HepG2 (cell line): ENCODE measurements at regions of chrX and their contacts with region 1.

Region 1: DNA sequence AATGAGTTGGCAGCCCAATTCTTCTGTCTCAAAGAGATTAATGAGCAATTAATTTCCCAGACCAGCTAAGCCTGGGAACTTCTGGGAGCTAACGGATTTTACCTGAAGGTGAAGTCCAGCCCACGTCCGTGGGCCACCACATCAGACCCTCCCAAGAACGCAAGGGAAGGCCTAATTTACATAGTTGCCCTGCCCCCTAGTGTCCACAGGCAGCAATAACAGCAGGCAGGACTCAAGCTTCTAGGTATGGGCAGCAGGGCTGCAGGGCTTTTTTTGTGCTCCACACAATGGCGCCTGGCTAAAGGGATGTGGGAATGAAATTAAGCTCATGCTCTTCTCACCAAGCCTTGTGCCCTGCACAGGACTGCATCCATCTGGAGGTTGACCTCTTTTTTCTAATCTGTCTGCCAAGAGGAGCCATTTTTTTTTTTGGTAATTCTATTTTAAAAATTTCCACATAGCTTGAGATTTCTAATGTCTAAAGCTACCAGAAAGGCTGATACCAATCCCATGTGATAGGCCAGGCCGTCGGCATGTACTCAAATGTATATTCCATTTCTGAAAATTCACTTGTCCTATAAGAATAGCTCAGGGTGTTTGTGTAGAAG is 111.9 kb upstream of the TMEM164 start:
- DNase-seq: peak; percentile 43
- ATAC-seq: peak; percentile 89
- H3K4me3 ChIP-seq: peak overlapping the region in 2 of 3 experiments; percentile 28 to 33; a peak in 2 of 6 replicates
- H3K27ac ChIP-seq: no peak overlapping the region
- H3K4me1 ChIP-seq: peaks cover 34% of the 10 kb centered on the region
- H3K27me3 ChIP-seq: no peaks in the 10 kb centered on the region
- CTCF ChIP-seq: peak; percentile 89
- EP300 ChIP-seq: no peak
- POLR2A ChIP-seq: no peak
- RAD21 ChIP-seq: peak; percentile 34; the same call in 1 of the 2 replicates

Region 2: GRCh38 chrX:109485470-109486340 is 405.3 kb before region 1 on chrX:
- CTCF ChIA-PET with region 1: interaction called, 10 read pairs
- POLR2A ChIA-PET with region 1: no interaction called
- in situ Hi-C with region 1: loop called (anchors 5 kb)
- intact Hi-C with region 1: loop called (anchors 5 kb)
- DNase-seq: peak; percentile 47
- ATAC-seq: no peak; the same call in 2 of the 3 replicates
- H3K4me3 ChIP-seq: no peak overlapping the region
- H3K27ac ChIP-seq: no peak overlapping the region
- H3K4me1 ChIP-seq: peaks cover 17% of the 10 kb centered on the region
- H3K27me3 ChIP-seq: no peaks in the 10 kb centered on the region
- CTCF ChIP-seq: peak; percentile 80
- EP300 ChIP-seq: no peak
- POLR2A ChIP-seq: no peak
- RAD21 ChIP-seq: peak; percentile 61; the same call in 1 of the 2 replicates

Region 3: DNA sequence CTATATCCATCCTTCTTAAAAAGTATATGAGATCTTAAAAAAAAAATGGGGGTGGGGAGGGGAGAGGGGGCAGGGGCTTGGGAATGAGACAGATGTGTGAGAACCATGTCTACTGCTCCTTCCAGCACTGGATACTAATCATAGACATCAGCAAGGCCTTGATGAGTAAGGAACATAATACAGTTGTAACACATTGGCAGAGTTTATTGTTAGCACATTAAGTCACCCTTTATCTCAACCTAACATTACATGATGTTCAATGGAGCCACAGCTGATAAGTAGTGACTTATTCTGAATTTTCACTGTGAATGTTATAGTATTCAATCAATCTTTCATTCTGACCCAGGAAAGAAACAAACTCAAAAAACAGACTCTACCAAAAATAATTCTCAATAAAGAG is 218.8 kb before region 1 on chrX:
- CTCF ChIA-PET with region 1: no interaction called
- POLR2A ChIA-PET with region 1: no interaction called
- in situ Hi-C with region 1: no loop called
- intact Hi-C with region 1: no loop called
- DNase-seq: no peak
- ATAC-seq: no peak
- H3K4me3 ChIP-seq: no peak overlapping the region
- H3K27ac ChIP-seq: no peak overlapping the region
- H3K4me1 ChIP-seq: no peaks in the 10 kb centered on the region
- H3K27me3 ChIP-seq: no peaks in the 10 kb centered on the region
- CTCF ChIP-seq: no peak
- EP300 ChIP-seq: no peak
- POLR2A ChIP-seq: no peak
- RAD21 ChIP-seq: no peak

Region 4: DNA sequence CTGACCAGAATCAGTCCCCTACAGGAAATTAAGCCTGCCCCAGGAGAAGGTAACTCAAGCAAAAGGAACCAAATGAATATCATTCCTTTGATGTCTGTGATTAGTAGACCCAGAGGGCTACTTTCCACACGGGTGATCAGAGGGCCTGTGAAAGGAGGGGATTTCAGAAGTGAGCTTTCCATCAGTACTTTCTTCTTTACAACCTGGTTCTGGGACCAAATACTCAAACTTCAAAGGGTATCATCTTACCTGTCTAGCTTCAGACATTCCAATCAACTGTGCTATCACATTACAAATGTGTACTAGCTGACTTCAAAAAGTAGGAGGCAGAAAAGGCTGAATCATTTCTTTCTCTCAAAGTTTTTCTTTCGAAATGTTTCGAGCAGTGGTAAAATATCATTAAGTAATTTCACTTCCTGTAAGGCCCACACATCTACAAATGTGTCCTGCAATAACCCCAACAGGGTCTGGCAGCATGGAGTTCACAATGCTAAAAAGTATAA is 181.8 kb before region 1 on chrX:
- CTCF ChIA-PET with region 1: interaction called, 10 read pairs
- POLR2A ChIA-PET with region 1: interaction called, 4 read pairs
- in situ Hi-C with region 1: no loop called
- intact Hi-C with region 1: loop called (anchors 1 kb)
- DNase-seq: peak; percentile 82
- ATAC-seq: peak; percentile 22
- H3K4me3 ChIP-seq: no peak overlapping the region
- H3K27ac ChIP-seq: peak overlapping the region; percentile 46
- H3K4me1 ChIP-seq: peaks cover 94% of the 10 kb centered on the region
- H3K27me3 ChIP-seq: no peaks in the 10 kb centered on the region
- CTCF ChIP-seq: no peak
- EP300 ChIP-seq: peak in 1 of 2 experiments; percentile 49; a peak in 1 of 4 replicates
- POLR2A ChIP-seq: no peak
- RAD21 ChIP-seq: no peak

Region 5: DNA sequence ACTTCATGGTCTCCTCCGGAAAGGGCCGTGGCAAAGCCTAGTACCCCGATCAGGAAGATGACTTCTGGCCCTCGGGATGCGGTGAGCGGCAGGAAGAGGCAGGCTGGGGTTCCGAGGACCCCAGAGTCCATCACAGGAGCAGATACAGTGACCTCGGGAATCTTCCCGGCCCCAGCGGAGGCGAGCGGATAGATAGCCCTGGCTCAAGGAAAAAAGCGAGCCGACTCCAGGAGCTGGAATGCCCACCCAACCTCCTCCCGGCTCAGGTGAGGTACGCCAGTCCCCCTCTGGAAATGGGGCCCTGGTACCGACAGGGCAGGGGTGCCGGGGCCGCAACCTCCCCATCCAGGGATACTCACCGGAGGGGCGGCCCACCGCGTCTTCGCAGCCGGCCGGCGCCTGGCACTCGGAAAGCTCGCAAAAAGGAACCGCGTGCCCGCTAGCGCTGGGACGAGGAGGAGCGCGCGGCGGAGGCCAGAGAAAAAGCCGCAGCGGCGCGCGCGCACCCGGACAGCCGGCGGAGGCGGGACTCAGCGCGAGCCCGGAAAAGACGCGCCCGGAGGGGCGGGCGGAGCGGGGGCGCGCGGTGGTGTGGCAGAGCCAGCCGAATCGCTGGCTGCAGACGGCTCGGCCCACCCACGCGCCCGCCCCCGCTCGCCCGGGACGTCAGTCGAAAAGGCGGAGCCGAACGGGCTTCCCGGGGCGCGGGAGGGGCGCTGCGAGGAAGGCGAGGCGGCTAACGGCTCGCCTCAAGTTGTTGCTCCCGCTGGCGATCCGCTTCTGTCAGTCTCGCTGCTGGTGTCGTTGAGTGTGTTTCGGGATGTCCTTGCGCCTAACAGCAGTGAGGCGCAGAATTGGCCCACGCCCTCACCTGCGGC is 158.0 kb before region 1 on chrX and contains the start of gene ACSL4:
- CTCF ChIA-PET with region 1: no interaction called
- POLR2A ChIA-PET with region 1: no interaction called
- in situ Hi-C with region 1: loop called (anchors 10 kb)
- intact Hi-C with region 1: no loop called
- DNase-seq: peak; percentile 63
- ATAC-seq: peak; percentile 96
- H3K4me3 ChIP-seq: peak within 1 kb of the TSS; percentile 85 to 91 (median 89)
- H3K27ac ChIP-seq: peak within 1 kb of the TSS; percentile 91
- H3K4me1 ChIP-seq: peaks cover 44% of the 10 kb centered on the region
- H3K27me3 ChIP-seq: no peaks in the 10 kb centered on the region; a peak in 1 of 5 replicates
- CTCF ChIP-seq: no peak
- EP300 ChIP-seq: no peak; a peak in 1 of 4 replicates
- POLR2A ChIP-seq: peak; percentile 70 to 89
- RAD21 ChIP-seq: no peak
- total RNA-seq, gene ACSL4: 316 and 521 TPM in 2 replicates